ENCODE measurements at regions of chr21 and their contacts with region 1.

Region 1: GRCh38 chr21:35095859-35096291 is 46.8 kb upstream of the RUNX1 start:
- DNase-seq: no peak
- H3K4me3 Mint-ChIP-seq: no peak overlapping the region
- H3K27ac Mint-ChIP-seq: peak overlapping the region; percentile 67
- H3K4me1 Mint-ChIP-seq: peaks cover 42% of the 10 kb centered on the region
- H3K27me3 Mint-ChIP-seq: no peaks in the 10 kb centered on the region

Region 2: GRCh38 chr21:34967509-34968289 is 128.2 kb before region 1 on chr21:
- intact Hi-C with region 1: loop called (anchors 1 kb)
- DNase-seq: no peak
- H3K4me3 Mint-ChIP-seq: peak overlapping the region; percentile 80
- H3K27ac Mint-ChIP-seq: peak overlapping the region; percentile 94
- H3K4me1 Mint-ChIP-seq: peaks cover 91% of the 10 kb centered on the region
- H3K27me3 Mint-ChIP-seq: peaks cover 2% of the 10 kb centered on the region

Region 3: DNA sequence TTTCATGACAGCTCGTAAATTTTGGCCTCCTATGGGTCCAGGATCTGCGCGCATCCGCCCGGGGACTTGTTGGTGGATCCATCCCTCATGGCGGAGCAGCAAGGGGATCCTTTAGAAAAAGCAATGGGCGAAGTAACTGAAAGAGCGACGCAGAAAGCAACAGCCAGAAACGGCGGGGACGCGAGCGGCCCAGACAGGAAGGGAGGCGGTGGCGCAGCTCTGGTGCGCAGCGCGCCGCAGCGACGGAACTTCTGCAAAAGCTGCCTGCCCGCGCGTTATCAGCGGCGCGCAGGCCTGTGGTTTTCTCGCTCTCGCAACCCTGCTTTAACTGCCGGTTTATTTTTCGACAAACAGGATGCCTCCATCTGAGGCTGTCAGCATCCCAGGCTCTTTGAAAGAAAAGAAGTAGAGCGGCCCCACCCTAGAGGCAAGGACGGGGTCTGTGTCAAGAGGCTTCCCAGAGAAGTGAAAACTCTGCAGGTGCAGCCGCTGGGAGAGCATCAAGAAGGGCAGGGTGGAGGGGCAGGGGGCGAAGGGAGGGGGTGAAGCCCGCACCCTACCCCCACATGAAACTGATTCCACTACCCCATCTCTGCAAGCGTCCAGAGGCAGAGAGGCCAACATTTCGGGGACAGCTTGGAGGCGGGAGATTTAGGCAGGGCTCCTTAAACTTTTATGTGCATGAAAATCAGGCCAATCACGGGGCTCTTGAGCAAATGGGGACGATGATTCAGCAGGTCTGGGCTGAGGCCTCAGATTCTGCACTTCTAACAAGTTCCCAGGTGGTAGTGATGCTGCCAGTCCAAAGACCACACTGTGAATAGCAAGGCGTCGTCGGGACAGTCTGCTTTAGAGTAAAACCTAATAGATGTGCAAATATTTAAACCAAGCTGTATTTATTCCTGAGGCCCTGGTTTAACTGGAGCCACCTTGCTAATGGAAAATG is 69.0 kb before region 1 on chr21:
- intact Hi-C with region 1: loop called (anchors 2 kb)
- DNase-seq: peak; percentile 83
- H3K4me3 Mint-ChIP-seq: peak overlapping the region; percentile 85
- H3K27ac Mint-ChIP-seq: peak overlapping the region; percentile 99
- H3K4me1 Mint-ChIP-seq: peaks cover 91% of the 10 kb centered on the region
- H3K27me3 Mint-ChIP-seq: no peaks in the 10 kb centered on the region

Region 4: GRCh38 chr21:35150562-35151226 is 54.8 kb after region 1 on chr21:
- intact Hi-C with region 1: loop called (anchors 1 kb)
- DNase-seq: no peak
- H3K4me3 Mint-ChIP-seq: no peak overlapping the region
- H3K27ac Mint-ChIP-seq: peak overlapping the region; percentile 42
- H3K4me1 Mint-ChIP-seq: peaks cover 36% of the 10 kb centered on the region
- H3K27me3 Mint-ChIP-seq: no peaks in the 10 kb centered on the region

Region 5: GRCh38 chr21:35254006-35254764 is 158.3 kb after region 1 on chr21:
- intact Hi-C with region 1: loop called (anchors 1 kb)
- DNase-seq: no peak
- H3K4me3 Mint-ChIP-seq: no peak overlapping the region
- H3K27ac Mint-ChIP-seq: no peak overlapping the region
- H3K4me1 Mint-ChIP-seq: peaks cover 13% of the 10 kb centered on the region
- H3K27me3 Mint-ChIP-seq: no peaks in the 10 kb centered on the region

Region 6: DNA sequence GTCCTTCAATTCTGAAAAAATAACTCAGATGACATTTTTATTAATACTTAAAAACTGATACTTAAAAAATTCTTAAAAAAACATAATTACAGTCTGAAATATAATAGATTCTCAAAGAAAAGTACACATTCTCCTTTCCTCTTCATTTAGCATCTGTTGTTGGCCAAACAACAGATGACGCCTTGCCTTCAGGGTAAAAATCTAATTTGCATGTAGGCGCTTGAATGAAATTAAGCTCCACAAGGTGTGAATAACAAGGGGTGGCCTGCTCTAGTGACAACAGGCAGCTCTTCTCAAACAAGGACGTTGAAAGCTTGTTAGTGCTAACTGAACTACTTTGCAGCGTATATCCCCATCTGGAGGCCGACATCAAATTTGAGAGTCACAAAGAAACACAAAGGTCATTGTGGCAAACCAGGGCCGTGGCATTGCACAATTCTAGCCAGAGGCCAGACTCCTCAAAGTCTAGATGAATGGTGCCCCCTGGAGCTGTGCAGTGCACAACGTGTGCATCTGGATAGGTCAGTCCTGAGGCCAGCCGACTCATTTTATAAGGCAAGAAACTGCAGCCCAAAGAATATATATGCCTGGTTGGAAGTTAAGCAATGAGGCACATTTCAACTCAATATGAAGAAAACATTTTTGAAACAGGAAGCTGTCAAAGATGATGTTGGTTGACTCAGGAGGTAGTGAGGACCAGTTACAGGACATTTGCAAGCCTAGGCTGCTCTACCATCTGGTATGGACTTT is 412.4 kb after region 1 on chr21:
- intact Hi-C with region 1: loop called (anchors 2 kb)
- DNase-seq: no peak
- H3K4me3 Mint-ChIP-seq: no peak overlapping the region
- H3K27ac Mint-ChIP-seq: no peak overlapping the region
- H3K4me1 Mint-ChIP-seq: peaks cover 68% of the 10 kb centered on the region
- H3K27me3 Mint-ChIP-seq: no peaks in the 10 kb centered on the region

Measured in activated T-helper 1 cell treated with anti-CD3 and anti-CD28 coated beads, Interleukin-12 subunit alpha, Interleukin-12 subunit beta, Interleukin-2, Interleukin-4 antibody, amounts not matched to agents 30 ng/mL and 10 ng/mL and 1 ng/mL, durations not matched to agents 14 hours and 24 hours and 36 hours (primary cell).